ENCODE measurements at regions of chr4 and their contacts with region 1.

Region 1: GRCh38 chr4:185425647-185426352 is at the start of gene UFSP2:
- DNase-seq: peak; percentile 46 to 90
- H3K4me3 ChIP-seq: peak within 1 kb of the TSS; percentile 85 to 98 (median 90)
- H3K27ac ChIP-seq: peak within 1 kb of the TSS; percentile 100
- H3K4me1 ChIP-seq: peaks cover 0 to 5% (median 2%) of the 10 kb centered on the region in 4 experiments; a peak in 3 of 7 replicates
- H3K27me3 ChIP-seq: no peaks in the 10 kb centered on the region
- CTCF ChIP-seq: no peak
- EP300 ChIP-seq: peak in 1 of 2 experiments; percentile 99; a peak in 2 of 3 replicates
- POLR2A ChIP-seq: peak in 1 of 2 experiments; percentile 43; a peak in 1 of 3 replicates
- RAD21 ChIP-seq: peak in 1 of 2 experiments; percentile 7; a peak in 1 of 4 replicates
- total RNA-seq, gene UFSP2: 24.0 and 26.0 TPM in 2 replicates

Region 2: GRCh38 chr4:185445209-185445608 is 19.4 kb after region 1 on chr4:
- CTCF ChIA-PET with region 1: interaction called, 10 read pairs
- POLR2A ChIA-PET with region 1: interaction called, 3 read pairs
- DNase-seq: no peak
- H3K4me3 ChIP-seq: no peak overlapping the region
- H3K27ac ChIP-seq: no peak overlapping the region
- H3K4me1 ChIP-seq: no peaks in the 10 kb centered on the region
- H3K27me3 ChIP-seq: no peaks in the 10 kb centered on the region
- CTCF ChIP-seq: no peak
- EP300 ChIP-seq: no peak
- POLR2A ChIP-seq: no peak
- RAD21 ChIP-seq: no peak

Region 3: DNA sequence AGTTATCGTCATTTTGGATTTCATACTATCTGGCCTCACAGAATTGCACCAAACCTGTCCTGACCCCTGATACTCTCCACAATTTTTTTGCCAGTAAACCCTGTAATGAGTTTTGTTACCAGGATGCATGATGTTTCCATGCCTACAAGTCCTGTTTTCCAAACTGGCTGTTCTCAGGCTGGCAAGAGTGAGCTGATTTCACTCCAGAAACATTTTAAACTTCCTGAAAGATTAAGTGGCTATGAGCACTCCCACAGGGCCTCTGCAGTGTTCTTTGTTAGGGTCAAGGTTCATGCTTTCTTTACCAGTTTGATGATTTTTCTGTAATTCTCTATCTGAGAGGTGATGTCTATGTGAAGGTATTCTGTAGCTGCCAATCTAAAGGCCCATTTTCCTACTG is 141.2 kb after region 1 on chr4:
- CTCF ChIA-PET with region 1: no interaction called
- POLR2A ChIA-PET with region 1: no interaction called
- DNase-seq: no peak
- H3K4me3 ChIP-seq: no peak overlapping the region
- H3K27ac ChIP-seq: no peak overlapping the region
- H3K4me1 ChIP-seq: no peaks in the 10 kb centered on the region; a peak in 1 of 7 replicates
- H3K27me3 ChIP-seq: no peaks in the 10 kb centered on the region
- CTCF ChIP-seq: no peak
- EP300 ChIP-seq: no peak
- POLR2A ChIP-seq: no peak
- RAD21 ChIP-seq: no peak